HCT116 (cell line): ENCODE measurements at regions of chr10 and their contacts with region 1.

Region 1: DNA sequence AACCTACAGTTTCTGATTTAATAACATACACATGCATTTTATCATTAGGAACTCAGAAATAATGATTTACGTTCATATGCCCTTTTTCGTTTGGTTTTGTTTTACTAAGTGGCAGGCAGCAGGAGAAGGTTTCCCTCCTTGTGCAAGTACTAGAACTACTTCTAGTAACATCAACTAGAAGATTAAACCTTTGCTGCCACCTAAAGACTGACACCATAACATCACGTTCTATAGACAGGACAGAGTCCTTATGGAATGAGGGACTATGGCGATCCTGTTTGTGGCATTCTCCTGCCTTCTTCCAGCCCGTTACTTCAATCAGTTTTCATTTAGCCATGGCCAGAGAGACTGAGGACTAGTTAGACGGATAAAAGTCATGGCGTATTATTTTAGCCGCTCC is 53.2 kb downstream of the GAD2 start:
- DNase-seq: peak; percentile 42
- ATAC-seq: peak; percentile 90
- H3K4me3 ChIP-seq: no peak overlapping the region
- H3K27ac ChIP-seq: no peak overlapping the region
- H3K4me1 ChIP-seq: no peaks in the 10 kb centered on the region
- H3K27me3 ChIP-seq: peaks cover 51% of the 10 kb centered on the region
- CTCF ChIP-seq: peak; percentile 32 to 52 (median 41); a peak in 5 of 6 replicates
- POLR2A ChIP-seq: no peak
- RAD21 ChIP-seq: peak; percentile 66

Region 2: DNA sequence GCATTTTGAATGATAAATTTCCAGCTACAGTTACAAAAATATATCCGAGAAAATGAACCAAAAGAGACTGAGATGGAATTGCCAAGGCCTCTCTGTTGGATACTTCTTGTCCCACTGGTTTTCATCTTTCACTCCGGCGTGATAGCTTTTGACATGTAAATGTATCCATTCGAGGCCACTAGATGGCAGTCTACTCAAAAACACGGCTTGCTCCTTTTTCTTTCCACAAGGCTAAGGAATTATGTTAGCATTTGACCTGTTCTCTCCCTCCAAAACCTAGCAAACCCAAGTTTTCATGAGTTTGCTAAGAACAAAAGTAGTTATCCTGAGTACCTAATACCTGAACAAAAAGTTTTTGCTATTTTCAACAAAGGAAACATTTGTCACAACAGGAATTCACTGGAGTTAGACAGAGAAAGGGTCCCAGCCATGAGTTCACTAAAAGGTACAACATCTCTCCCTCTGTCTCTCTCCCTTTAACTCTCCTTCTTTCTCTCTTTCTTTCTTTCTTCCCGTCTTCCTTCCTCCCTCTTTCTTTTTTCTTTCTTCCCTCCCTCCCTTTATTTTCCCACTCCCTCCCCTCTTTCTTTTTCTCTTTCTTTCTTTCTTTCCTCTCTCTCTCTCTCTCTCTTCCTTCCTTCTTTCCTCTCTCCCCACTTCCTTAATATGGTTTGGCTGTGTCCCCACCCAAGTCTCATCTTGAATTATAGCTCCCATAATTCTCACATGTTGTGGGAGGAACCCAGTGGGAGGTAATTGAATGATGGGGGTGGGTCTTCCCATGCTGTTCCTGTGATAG is 543.6 kb before region 1 on chr10:
- CTCF ChIA-PET with region 1: interaction called, 9 read pairs
- POLR2A ChIA-PET with region 1: no interaction called
- RAD21 ChIA-PET with region 1: no interaction called
- intact Hi-C with region 1: loop called (anchors 2 kb)
- DNase-seq: peak; percentile 35
- ATAC-seq: peak; percentile 81
- H3K4me3 ChIP-seq: no peak overlapping the region
- H3K27ac ChIP-seq: no peak overlapping the region
- H3K4me1 ChIP-seq: no peaks in the 10 kb centered on the region
- H3K27me3 ChIP-seq: peaks cover 19% of the 10 kb centered on the region; the same call in 1 of the 2 replicates
- CTCF ChIP-seq: peak; percentile 20 to 77 (median 58); a peak in 4 of 6 replicates
- POLR2A ChIP-seq: no peak
- RAD21 ChIP-seq: peak; percentile 66

Region 3: GRCh38 chr10:25758041-25758457 is 511.7 kb before region 1 on chr10:
- CTCF ChIA-PET with region 1: interaction called, 4 read pairs
- POLR2A ChIA-PET with region 1: no interaction called
- RAD21 ChIA-PET with region 1: no interaction called
- intact Hi-C with region 1: loop called (anchors 1 kb)
- DNase-seq: peak; percentile 26
- ATAC-seq: peak; percentile 69; the same call in 1 of the 2 replicates
- H3K4me3 ChIP-seq: no peak overlapping the region
- H3K27ac ChIP-seq: no peak overlapping the region
- H3K4me1 ChIP-seq: no peaks in the 10 kb centered on the region
- H3K27me3 ChIP-seq: no peaks in the 10 kb centered on the region; the same call in 1 of the 2 replicates
- CTCF ChIP-seq: peak; percentile 32 to 76 (median 74); a peak in 5 of 6 replicates
- POLR2A ChIP-seq: no peak
- RAD21 ChIP-seq: peak; percentile 59